PC-9 (cell line): ENCODE measurements at regions of chr11 and their contacts with region 1.

Region 1: DNA sequence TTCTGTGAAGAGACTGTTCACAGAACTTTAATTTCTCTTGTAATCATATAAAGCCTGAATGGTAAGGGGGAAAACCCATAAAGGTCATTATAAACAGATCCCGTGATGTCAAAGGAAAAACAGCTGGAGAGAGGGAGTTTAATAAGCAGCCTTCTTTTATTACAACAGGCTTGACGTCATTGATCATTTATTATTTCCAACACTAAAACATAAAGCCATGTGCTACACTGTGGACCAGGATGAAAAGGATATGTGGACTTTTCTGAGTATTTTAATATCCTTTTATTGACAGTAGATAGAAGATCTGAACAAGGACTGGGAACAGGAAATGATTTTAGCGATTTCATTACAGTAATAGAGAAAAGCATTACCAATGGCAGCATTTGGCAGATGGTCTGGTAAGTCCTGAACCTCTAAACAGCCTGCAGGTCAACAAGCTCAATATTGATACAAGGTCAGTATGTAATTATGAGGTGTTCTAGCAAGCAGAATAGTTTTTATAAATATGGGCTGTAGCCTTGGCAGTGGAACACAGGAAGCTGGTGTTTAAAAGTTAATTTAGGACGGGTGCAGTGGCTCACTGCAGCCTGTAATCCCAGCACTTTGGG is 25.1 kb upstream of the TPH1 start:
- DNase-seq: no peak
- H3K4me3 ChIP-seq: no peak overlapping the region
- H3K27ac ChIP-seq: no peak overlapping the region
- H3K4me1 ChIP-seq: no peaks in the 10 kb centered on the region
- H3K27me3 ChIP-seq: no peaks in the 10 kb centered on the region
- CTCF ChIP-seq: no peak

Region 2: DNA sequence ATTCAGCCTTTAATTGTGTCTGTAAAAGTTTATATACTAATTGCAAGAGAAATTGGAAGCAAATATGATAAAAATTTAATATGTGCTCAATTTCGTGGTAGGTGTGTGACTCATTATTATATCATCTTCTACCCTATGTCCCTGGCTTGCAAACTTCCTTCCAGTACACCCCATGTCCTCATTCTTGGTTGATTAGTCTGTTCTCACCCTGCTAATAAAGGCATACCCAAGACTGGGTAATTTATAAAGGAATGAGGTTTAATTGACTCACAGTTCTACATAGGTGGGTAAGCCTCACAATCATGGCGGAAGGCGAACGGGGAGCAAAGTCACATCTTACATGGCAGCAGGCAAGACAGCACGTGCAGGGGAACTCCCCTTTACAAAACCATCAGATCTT is 73.0 kb after region 1 on chr11:
- CTCF ChIA-PET with region 1: no interaction called
- POLR2A ChIA-PET with region 1: no interaction called
- intact Hi-C with region 1: no loop called
- DNase-seq: peak in 1 of 2 experiments; percentile 83
- H3K4me3 ChIP-seq: no peak overlapping the region
- H3K27ac ChIP-seq: peak overlapping the region; percentile 44
- H3K4me1 ChIP-seq: peaks cover 10% of the 10 kb centered on the region; the same call in 1 of the 2 replicates
- H3K27me3 ChIP-seq: peaks cover 19% of the 10 kb centered on the region
- CTCF ChIP-seq: no peak

Region 3: GRCh38 chr11:18203723-18204122 is 132.5 kb after region 1 on chr11:
- CTCF ChIA-PET with region 1: interaction called, 15 read pairs
- POLR2A ChIA-PET with region 1: no interaction called
- intact Hi-C with region 1: no loop called
- DNase-seq: no peak
- H3K4me3 ChIP-seq: no peak overlapping the region
- H3K27ac ChIP-seq: no peak overlapping the region
- H3K4me1 ChIP-seq: no peaks in the 10 kb centered on the region
- H3K27me3 ChIP-seq: no peaks in the 10 kb centered on the region
- CTCF ChIP-seq: peak; percentile 41